Left cardiac atrium (tissue), 4 donors: ENCODE measurements at regions of chr9 and their contacts with region 1.

Region 1: GRCh38 chr9:102728946-102729345 is 266.2 kb upstream of the CYLC2 start:
- DNase-seq: no peak
- ATAC-seq: no peak

Region 2: GRCh38 chr9:102650896-102651295 is 78.0 kb before region 1 on chr9:
- intact Hi-C with region 1: no loop called
- DNase-seq: no peak
- ATAC-seq: no peak

Region 3: DNA sequence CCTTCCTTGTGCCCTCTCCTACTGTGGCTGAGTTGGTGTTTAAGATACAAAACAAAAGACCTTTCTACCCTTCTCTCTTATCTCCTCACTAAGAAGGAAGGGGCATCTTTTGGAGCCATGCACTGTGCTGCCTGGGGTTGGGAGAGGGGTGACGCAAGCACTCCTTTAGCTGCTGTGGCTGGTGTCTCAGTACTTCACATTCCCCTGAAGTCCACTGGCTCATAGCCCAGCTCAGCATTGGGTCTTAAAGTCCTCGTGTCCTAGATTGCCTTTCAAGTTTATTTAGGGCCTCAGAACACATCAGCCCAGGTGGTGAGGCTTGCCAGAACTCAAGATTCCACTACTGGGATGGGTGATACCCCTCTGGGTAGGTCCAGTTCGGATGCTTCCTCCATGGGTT is 59.7 kb before region 1 on chr9:
- intact Hi-C with region 1: loop called in 1 of 2 experiments (anchors 10 kb)
- DNase-seq: no peak
- ATAC-seq: no peak